ENCODE measurements at regions of chr3 and their contacts with region 1.

Region 1: DNA sequence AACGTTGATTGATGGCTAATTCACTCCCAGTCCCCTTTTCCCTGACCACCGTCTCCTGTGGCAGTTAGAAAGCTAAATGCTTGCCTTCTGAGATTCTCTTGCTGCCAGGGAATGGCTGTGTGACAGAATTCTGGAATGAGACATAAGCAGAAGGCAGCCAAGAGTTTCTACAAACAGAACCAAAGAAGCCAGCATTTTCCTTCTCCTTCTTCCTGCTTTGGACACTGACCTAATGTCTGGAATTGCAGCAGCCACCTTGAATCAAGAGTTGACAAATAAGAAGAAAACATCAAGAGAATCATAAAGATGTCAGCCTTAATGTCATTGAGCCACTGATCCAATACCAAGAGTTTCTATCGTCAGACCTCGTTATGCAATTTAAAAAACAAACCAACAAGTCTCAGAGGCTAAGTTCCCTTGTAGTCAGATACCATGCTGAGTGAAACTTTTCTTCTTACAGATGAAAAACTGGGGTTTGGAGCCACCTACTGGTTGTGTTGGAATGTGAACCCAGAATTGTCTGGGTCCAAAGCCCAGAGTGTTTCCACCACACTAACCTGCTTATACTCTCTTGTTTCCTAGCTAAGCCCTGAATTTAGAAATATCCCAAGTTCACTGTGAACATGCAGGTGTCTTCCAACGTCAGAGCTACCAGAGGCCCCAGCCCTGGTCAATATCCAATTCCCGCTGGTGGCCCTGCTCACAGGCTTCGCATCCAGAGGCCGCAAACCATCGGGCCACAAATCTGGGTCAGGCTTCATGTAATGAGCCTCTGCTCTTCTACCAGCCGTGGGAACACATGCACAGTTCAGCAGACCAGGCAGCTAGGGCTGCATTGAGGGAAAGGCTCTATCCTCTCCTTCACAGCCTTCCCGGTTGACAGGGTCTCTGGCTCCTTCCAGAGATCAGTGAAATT is 42.5 kb downstream of the MCF2L2 start:
- DNase-seq: peak in 1 of 2 donors; percentile 83
- ATAC-seq: peak; percentile 84 to 85 (median 85)
- H3K4me3 ChIP-seq: no peak overlapping the region
- H3K4me3 Mint-ChIP-seq: no peak overlapping the region
- H3K27ac ChIP-seq: no peak overlapping the region
- H3K27ac Mint-ChIP-seq: no peak overlapping the region
- H3K4me1 ChIP-seq: no peaks in the 10 kb centered on the region
- H3K4me1 Mint-ChIP-seq: peaks cover 4% of the 10 kb centered on the region in 2 donors
- H3K27me3 ChIP-seq: no peaks in the 10 kb centered on the region
- H3K27me3 Mint-ChIP-seq: no peaks in the 10 kb centered on the region
- CTCF ChIP-seq: peak; percentile 75

Region 2: GRCh38 chr3:183122257-183122932 is 263.6 kb before region 1 on chr3:
- intact Hi-C with region 1: loop called (anchors 1 kb)
- DNase-seq: peak in 1 of 2 donors; percentile 73
- ATAC-seq: peak; percentile 68 to 73 (median 69)
- H3K4me3 ChIP-seq: no peak overlapping the region
- H3K4me3 Mint-ChIP-seq: no peak overlapping the region
- H3K27ac ChIP-seq: no peak overlapping the region
- H3K27ac Mint-ChIP-seq: no peak overlapping the region
- H3K4me1 ChIP-seq: no peaks in the 10 kb centered on the region
- H3K4me1 Mint-ChIP-seq: no peaks in the 10 kb centered on the region
- H3K27me3 ChIP-seq: peaks cover 2% of the 10 kb centered on the region
- H3K27me3 Mint-ChIP-seq: peaks cover 3 to 4% of the 10 kb centered on the region in 2 donors
- CTCF ChIP-seq: peak; percentile 85

Region 3: DNA sequence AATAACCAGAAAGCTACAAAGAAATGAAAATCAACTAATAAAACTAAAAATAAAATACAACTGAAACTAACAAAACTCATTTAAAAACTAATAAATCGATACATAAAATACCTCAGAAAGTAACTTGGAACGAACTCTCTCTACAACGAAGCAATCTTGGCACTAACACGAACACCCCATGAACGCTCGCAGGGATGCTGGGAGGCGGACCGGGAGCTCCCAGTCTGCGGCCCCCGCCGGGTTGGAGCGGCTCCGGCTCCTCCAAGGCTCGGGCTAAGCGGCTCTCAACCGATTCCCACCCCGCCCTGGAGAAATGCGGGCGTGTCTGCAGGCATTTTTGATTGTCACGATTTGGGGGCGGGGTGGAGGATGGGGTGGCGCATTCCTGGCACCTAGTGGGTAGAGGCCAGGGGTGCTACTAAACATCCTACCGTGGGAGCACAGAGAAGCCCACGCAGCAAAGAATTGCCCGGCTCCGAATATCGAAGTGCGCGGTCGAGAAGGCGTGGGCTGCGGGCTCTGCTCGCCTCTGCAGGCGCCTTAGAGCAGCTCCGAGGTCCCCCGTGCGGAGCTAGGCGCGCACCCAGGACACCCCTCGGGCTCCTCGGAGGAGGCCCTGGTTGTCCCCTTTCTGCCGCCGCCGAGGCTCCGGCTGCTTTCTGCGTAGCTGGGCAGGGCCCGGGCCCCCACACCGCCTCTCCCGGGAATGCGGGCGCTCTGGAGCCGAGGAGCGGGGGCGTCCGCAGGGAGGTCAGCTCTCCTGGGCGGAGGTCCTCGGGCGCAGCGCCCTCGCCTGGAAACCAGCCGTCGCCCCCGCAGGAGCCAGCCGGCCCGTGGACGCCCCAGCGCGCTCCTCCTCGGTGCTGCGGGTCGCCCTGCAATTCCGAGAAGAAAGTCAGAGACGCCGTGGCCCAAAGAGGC is 207.1 kb before region 1 on chr3:
- intact Hi-C with region 1: loop called (anchors 1 kb)
- DNase-seq: peak in 1 of 2 donors; percentile 51
- ATAC-seq: peak; percentile 34 to 66 (median 40)
- H3K4me3 ChIP-seq: no peak overlapping the region
- H3K4me3 Mint-ChIP-seq: peak overlapping the region; percentile 50
- H3K27ac ChIP-seq: no peak overlapping the region
- H3K27ac Mint-ChIP-seq: no peak overlapping the region
- H3K4me1 ChIP-seq: peaks cover 13% of the 10 kb centered on the region
- H3K4me1 Mint-ChIP-seq: peaks cover 0 to 10% of the 10 kb centered on the region in 2 donors
- H3K27me3 ChIP-seq: peaks cover 11% of the 10 kb centered on the region
- H3K27me3 Mint-ChIP-seq: peaks cover 32 to 39% of the 10 kb centered on the region in 2 donors
- CTCF ChIP-seq: no peak

Region 4: DNA sequence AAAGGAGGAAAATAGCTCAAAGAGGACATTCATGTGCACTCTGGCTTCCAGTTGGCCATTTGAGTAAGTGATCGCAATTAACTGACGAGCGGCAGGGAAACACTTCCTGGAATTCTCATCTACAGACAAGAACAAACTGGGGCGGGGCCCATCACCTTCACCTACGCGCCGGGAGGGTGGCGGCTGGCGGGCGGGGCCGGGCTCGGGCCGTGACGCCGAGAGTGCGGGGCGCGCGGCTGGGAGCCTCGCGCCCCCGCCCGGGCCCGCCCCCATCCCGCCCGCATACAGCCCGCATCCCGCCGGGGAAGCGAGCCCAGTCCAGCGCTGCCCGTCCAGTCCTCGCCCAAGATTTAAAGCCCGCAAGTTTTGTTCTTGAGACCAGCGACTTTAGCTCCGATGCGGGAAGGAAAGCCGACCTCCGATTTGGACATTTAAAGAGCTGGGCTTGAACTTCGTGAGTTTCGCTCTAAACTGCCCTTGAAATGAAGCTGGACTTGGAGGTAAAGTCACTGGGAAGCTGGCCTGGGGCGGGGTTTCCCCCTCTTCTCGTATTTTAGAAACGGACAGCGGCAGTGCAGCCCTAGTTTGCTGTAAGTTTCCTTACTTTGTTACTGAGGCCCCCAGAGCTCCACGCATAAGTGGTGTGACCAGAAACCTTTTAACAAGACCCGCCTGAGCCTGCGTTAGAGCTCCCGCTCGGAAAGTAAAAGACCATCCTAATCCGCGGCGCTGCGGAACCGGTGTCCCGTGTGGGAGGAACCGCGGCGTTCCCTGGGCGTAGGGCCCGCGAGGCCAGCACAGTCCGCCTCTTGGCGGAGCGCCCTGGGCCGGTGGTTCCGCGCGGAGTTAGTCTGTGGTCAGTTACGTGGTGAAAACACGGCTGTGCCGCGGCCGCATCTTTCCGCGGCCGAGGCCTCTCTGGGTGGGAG is 132.7 kb before region 1 on chr3 and contains the start of gene B3GNT5:
- intact Hi-C with region 1: loop called (anchors 1 kb)
- DNase-seq: peak; percentile 28 to 44
- ATAC-seq: peak; percentile 62 to 72 (median 66)
- H3K4me3 ChIP-seq: peak within 1 kb of the TSS; percentile 45
- H3K4me3 Mint-ChIP-seq: peak within 1 kb of the TSS; percentile 83
- H3K27ac ChIP-seq: no peak within 1 kb of the TSS
- H3K27ac Mint-ChIP-seq: peak within 1 kb of the TSS in 1 of 2 donors; percentile 78
- H3K4me1 ChIP-seq: peaks cover 14% of the 10 kb centered on the region
- H3K4me1 Mint-ChIP-seq: peaks cover 5 to 6% of the 10 kb centered on the region in 2 donors
- H3K27me3 ChIP-seq: peaks cover 20% of the 10 kb centered on the region
- H3K27me3 Mint-ChIP-seq: peaks cover 30 to 35% of the 10 kb centered on the region in 2 donors
- CTCF ChIP-seq: no peak
- total RNA-seq, gene B3GNT5: 1.2 to 4.5 (median 3.4) TPM

Region 5: DNA sequence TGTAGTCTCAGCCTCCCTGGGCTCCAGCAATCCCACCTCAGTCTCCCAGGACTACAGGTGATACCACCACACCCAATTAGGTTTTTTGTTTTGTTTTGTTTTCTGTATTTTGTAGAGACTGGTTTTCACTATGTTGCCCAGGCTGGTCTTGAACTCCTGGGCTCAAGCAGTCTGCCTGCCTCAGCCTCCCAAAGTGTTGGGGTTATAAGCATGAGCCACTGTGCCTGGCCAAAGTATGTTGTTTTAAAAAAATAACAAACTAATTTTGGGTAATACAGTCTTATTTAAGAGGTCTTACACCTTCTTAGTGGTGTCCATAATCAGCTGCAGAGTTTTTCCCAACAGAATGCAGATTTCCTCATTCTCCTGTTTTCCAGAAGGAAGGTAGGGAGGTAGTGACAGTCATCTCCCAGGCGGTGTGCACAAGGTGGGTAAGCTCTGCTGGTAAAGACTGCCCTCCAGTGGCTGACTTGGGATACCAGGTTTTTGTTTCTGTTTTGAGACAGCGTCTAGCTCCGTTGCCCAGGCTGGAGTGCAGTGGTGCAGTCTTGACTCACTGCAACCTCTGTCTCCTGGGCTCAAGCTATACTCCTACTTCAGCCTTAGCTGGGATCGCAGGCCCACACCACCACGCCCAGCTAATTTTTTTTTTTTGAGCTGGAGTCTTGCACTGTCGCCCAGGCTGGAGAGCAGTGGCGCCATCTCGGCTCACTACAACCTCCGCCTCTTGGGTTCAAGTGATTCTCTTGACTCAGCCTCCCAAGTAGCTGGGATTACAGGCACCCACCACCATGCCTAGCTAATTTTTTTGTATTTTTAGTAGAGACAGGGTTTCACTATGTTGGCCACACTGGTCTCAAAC is 381.0 kb after region 1 on chr3:
- intact Hi-C with region 1: loop called (anchors 5 kb)
- DNase-seq: peak; percentile 49 to 86
- ATAC-seq: peak; percentile 89 to 95 (median 91)
- H3K4me3 ChIP-seq: no peak overlapping the region
- H3K4me3 Mint-ChIP-seq: no peak overlapping the region
- H3K27ac ChIP-seq: no peak overlapping the region
- H3K27ac Mint-ChIP-seq: peak overlapping the region; percentile 13 to 27
- H3K4me1 ChIP-seq: no peaks in the 10 kb centered on the region
- H3K4me1 Mint-ChIP-seq: peaks cover 6% of the 10 kb centered on the region in 2 donors
- H3K27me3 ChIP-seq: no peaks in the 10 kb centered on the region
- H3K27me3 Mint-ChIP-seq: no peaks in the 10 kb centered on the region
- CTCF ChIP-seq: peak; percentile 78

Measured in natural killer cell (primary cell).